ENCODE measurements at regions of chr17 and their contacts with region 1.

Region 1: DNA sequence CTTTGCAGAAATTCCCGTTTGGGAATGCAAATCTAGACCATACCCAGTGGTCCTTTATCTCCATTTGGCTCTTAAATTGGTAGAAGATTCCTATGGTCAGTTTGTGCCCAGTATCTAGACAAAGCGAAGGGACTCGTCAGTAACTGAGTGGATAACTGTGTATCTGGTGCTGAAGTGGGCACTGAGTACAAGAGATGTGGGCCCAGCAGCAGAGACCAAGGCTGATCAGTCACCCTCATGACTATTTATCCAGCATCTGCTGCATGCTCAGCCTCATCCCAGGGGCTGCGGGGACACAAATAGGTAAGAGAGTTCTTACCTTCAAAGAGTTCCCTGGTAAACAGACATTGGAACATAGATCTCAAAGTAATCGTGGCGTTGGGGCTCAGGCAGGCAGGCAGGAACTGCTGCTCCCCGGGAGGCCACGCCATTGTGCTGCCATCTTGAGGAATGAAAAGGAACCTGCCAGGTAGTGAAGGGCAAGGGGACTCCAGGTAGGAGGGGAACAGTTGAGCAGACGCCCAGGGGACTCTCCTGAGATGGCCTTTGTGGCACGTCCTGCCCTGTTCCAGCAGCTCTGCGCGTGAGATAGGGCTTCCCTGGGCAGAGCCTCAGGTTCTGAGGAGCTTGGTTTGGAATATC is 10.3 kb downstream of the NT5M start:
- DNase-seq: peak; percentile 66 to 87 (median 70)
- ATAC-seq: peak; percentile 99
- H3K4me3 ChIP-seq: no peak overlapping the region
- H3K4me3 Mint-ChIP-seq: no peak overlapping the region
- H3K27ac ChIP-seq: no peak overlapping the region
- H3K27ac Mint-ChIP-seq: no peak overlapping the region
- H3K4me1 ChIP-seq: peaks cover 6% of the 10 kb centered on the region
- H3K4me1 Mint-ChIP-seq: peaks cover 6% of the 10 kb centered on the region
- H3K27me3 ChIP-seq: no peaks in the 10 kb centered on the region
- H3K27me3 Mint-ChIP-seq: no peaks in the 10 kb centered on the region
- CTCF ChIP-seq: peak; percentile 81

Region 2: DNA sequence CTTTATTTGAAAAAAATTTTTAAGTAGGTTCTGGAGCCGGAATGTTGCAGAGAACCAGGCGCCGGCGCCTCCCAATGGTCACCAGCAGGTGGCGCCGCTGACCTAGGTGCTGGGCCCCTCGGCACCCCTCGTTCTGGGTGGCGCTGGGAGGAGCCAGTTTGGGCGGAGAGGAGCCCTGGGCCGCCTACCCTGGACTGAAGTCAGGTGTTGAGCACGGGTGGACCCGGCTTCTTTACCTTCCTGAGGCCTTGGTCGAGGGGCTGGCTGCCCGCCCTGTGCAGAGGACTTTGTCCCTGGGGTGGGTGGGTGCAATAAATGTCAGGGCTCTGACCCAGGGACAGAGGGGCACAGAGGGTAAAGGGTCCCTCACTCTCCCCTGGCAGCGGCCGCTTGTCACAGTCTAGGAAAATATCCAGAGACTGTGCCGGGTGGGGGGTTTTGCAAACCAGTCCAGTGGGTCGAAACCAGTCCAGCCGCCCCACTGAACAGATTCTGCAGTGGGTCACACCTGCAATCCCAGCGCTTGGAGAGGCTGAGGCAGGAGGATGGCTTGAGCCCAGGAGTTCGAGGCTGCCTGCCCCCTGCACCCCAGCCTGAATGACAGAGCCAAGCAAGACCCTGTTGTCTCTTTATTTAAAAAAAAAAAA is 311.5 kb before region 1 on chr17:
- CTCF ChIA-PET with region 1: no interaction called
- POLR2A ChIA-PET with region 1: no interaction called
- intact Hi-C with region 1: loop called (anchors 1 kb)
- DNase-seq: peak; percentile 54 to 87 (median 74)
- ATAC-seq: peak; percentile 97
- H3K4me3 ChIP-seq: no peak overlapping the region
- H3K4me3 Mint-ChIP-seq: no peak overlapping the region
- H3K27ac ChIP-seq: no peak overlapping the region
- H3K27ac Mint-ChIP-seq: no peak overlapping the region
- H3K4me1 ChIP-seq: peaks cover 16% of the 10 kb centered on the region
- H3K4me1 Mint-ChIP-seq: peaks cover 5% of the 10 kb centered on the region
- H3K27me3 ChIP-seq: no peaks in the 10 kb centered on the region
- H3K27me3 Mint-ChIP-seq: no peaks in the 10 kb centered on the region
- CTCF ChIP-seq: peak; percentile 96

Measured in CD4-positive, alpha-beta T cell (primary cell).